Mammary epithelial cell (primary cell): ENCODE measurements at regions of chr12 and their contacts with region 1.

Region 1: GRCh38 chr12:27627123-27627835 is 69.0 kb upstream of the REP15 start:
- DNase-seq: peak; percentile 78
- H3K4me3 ChIP-seq: peak overlapping the region in 1 of 3 experiments; percentile 8
- H3K27ac ChIP-seq: peak overlapping the region; percentile 85
- H3K4me1 ChIP-seq: peaks cover 49% of the 10 kb centered on the region
- H3K27me3 ChIP-seq: no peaks in the 10 kb centered on the region
- CTCF ChIP-seq: peak in 1 of 2 donors; percentile 3

Region 2: DNA sequence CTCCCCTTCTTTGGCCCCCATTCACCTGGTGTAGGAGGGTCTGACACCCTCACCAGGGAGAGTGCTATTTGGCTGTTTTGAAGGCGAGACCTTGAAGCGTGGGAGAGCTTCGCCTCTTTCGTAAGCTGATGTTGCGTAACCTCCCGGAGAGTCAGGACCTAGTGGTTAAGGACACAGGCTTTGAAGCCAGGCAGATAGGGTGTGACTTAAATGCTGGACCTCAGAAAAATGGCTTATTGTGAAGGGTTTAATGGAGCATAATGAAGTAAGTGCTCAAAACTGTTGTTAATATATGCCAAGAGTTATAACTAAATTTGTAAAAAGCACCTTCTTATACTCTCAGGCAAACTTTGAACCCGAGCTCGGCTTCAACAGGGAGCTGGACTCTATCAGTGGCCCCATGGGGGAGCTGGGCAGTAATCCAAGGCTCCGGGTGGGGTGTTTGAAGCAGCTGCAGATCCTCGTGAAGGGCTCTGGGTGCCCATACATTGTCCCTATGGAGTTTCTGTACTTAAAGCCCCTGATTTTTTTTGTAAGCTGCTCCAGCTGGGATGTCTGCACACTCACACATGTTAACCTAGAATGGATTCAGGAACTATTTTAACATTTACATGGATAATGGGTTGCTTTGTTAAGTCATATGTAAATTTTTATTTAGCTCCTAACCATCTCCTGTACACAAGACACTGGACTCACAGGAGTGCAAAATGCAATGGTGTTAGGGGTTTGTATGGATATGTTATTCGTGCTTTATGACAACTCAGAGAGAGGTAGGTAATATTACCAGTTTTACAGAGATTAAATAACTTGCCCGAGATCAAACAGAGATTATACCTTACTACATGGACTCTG is 77.3 kb before region 1 on chr12:
- CTCF ChIA-PET with region 1: no interaction called
- dilution Hi-C with region 1: no loop called
- in situ Hi-C with region 1: no loop called
- intact Hi-C with region 1: loop called (anchors 5 kb)
- DNase-seq: peak; percentile 93
- H3K4me3 ChIP-seq: peak overlapping the region; percentile 25 to 28 (median 25)
- H3K27ac ChIP-seq: peak overlapping the region; percentile 95
- H3K4me1 ChIP-seq: peaks cover 83% of the 10 kb centered on the region
- H3K27me3 ChIP-seq: no peaks in the 10 kb centered on the region
- CTCF ChIP-seq: no peak

Region 3: GRCh38 chr12:27573972-27574371 is 53.3 kb before region 1 on chr12:
- CTCF ChIA-PET with region 1: no interaction called
- dilution Hi-C with region 1: no loop called
- in situ Hi-C with region 1: no loop called
- intact Hi-C with region 1: loop called (anchors 10 kb)
- DNase-seq: peak; percentile 83
- H3K4me3 ChIP-seq: no peak overlapping the region
- H3K27ac ChIP-seq: peak overlapping the region; percentile 65
- H3K4me1 ChIP-seq: peaks cover 71% of the 10 kb centered on the region
- H3K27me3 ChIP-seq: no peaks in the 10 kb centered on the region
- CTCF ChIP-seq: no peak

Region 4: DNA sequence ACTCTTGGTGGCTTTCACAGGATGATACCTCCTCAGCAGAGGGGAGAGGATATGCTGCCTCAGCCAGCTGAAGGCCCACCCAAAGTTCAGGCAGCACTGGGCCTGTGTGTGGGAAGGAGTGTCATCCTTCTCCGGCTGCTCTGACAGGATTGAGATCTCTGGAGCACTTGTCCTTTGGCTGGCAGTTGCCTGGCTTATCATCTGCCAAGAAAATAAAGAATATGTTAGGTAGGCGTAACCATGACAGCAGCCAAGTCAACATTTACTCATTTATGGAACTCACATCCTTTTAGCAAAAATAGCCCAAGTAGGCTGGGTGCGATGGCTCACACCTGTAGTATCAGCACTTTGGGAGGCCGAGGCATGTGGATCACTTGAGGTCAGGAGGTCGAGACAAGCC is 34.7 kb before region 1 on chr12:
- CTCF ChIA-PET with region 1: no interaction called
- dilution Hi-C with region 1: no loop called
- in situ Hi-C with region 1: no loop called
- intact Hi-C with region 1: loop called (anchors 2 kb)
- DNase-seq: peak; percentile 96
- H3K4me3 ChIP-seq: no peak overlapping the region
- H3K27ac ChIP-seq: peak overlapping the region; percentile 99
- H3K4me1 ChIP-seq: peaks cover 65% of the 10 kb centered on the region
- H3K27me3 ChIP-seq: no peaks in the 10 kb centered on the region
- CTCF ChIP-seq: no peak

Region 5: GRCh38 chr12:27607591-27607990 is 19.7 kb before region 1 on chr12:
- CTCF ChIA-PET with region 1: no interaction called
- dilution Hi-C with region 1: no loop called
- in situ Hi-C with region 1: no loop called
- intact Hi-C with region 1: loop called (anchors 2 kb)
- DNase-seq: no peak
- H3K4me3 ChIP-seq: no peak overlapping the region
- H3K27ac ChIP-seq: peak overlapping the region; percentile 13
- H3K4me1 ChIP-seq: peaks cover 39% of the 10 kb centered on the region
- H3K27me3 ChIP-seq: no peaks in the 10 kb centered on the region
- CTCF ChIP-seq: no peak